ENCODE measurements at regions of chr14 and their contacts with region 1.

Region 1: GRCh38 chr14:24093901-24094761 is at the start of gene PCK2:
- DNase-seq: peak; percentile 76
- ATAC-seq: peak; percentile 69
- H3K4me3 Mint-ChIP-seq: peak within 1 kb of the TSS; percentile 99
- H3K27ac Mint-ChIP-seq: peak within 1 kb of the TSS; percentile 99
- H3K4me1 Mint-ChIP-seq: peaks cover 31% of the 10 kb centered on the region
- H3K27me3 Mint-ChIP-seq: no peaks in the 10 kb centered on the region
- CTCF ChIP-seq: no peak
- total RNA-seq, gene PCK2: 82.1 and 102 TPM in 2 replicates

Region 2: GRCh38 chr14:24036169-24036962 is 57.8 kb before region 1 on chr14:
- CTCF ChIA-PET with region 1: interaction called, 3 read pairs
- POLR2A ChIA-PET with region 1: no interaction called
- intact Hi-C with region 1: loop called (anchors 1 kb)
- DNase-seq: peak; percentile 50
- ATAC-seq: peak; percentile 76
- H3K4me3 Mint-ChIP-seq: peak overlapping the region; percentile 89
- H3K27ac Mint-ChIP-seq: peak overlapping the region; percentile 62
- H3K4me1 Mint-ChIP-seq: peaks cover 7% of the 10 kb centered on the region
- H3K27me3 Mint-ChIP-seq: no peaks in the 10 kb centered on the region
- CTCF ChIP-seq: no peak

Region 3: DNA sequence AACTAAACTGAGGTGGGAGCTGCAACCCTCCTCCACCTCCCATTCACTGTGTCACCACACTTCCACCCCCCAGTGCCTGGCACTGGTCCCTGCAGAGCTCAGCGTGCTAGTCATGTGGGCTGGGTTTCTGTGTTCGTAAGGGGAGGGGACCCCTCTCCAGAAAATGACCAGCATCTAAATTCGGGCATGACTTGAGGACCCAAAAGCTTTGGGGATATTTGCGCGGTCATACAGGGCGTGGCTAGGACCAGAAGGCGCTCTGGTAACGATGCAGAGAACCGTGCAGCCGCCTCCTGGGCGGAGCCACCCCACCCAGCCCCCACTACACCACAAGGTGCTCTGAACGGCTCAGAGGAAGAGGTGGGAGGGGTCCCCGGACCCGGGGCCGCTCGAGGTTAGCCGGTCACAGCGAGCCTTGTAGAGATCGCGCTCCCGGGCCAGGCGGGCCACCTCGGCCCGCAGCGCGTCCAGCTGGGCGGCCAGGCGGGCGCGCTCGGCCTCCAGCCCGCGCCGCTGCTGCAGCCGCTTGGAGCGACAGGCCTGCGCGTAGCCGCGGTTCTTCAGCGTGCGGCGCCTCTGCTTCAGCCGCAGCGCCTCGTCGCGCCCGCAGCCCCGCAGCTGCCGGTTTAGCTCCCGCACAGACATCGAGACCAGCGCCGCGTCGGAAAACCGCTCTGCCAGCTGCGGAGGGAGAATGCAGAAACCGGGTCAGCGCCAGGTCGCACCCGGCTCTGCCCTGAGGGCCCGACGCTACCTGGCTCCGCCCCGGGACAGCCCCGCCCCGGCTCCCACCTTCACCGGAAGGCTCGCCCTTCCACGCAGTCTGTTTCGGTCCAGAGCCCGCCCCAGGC is 13.0 kb before region 1 on chr14:
- CTCF ChIA-PET with region 1: interaction called, 24 read pairs
- POLR2A ChIA-PET with region 1: interaction called, 111 read pairs
- intact Hi-C with region 1: loop called (anchors 1 kb)
- DNase-seq: peak; percentile 75
- ATAC-seq: peak; percentile 95
- H3K4me3 Mint-ChIP-seq: peak overlapping the region; percentile 82
- H3K27ac Mint-ChIP-seq: peak overlapping the region; percentile 83
- H3K4me1 Mint-ChIP-seq: peaks cover 32% of the 10 kb centered on the region
- H3K27me3 Mint-ChIP-seq: no peaks in the 10 kb centered on the region
- CTCF ChIP-seq: no peak

Region 4: GRCh38 chr14:24135834-24136542 is 41.9 kb after region 1 on chr14 and contains the start of gene PSME1:
- CTCF ChIA-PET with region 1: no interaction called
- POLR2A ChIA-PET with region 1: interaction called, 37 read pairs
- intact Hi-C with region 1: loop called (anchors 1 kb)
- DNase-seq: peak; percentile 94
- ATAC-seq: peak; percentile 97
- H3K4me3 Mint-ChIP-seq: peak within 1 kb of the TSS; percentile 91
- H3K27ac Mint-ChIP-seq: peak within 1 kb of the TSS; percentile 90
- H3K4me1 Mint-ChIP-seq: peaks cover 57% of the 10 kb centered on the region
- H3K27me3 Mint-ChIP-seq: no peaks in the 10 kb centered on the region
- CTCF ChIP-seq: no peak
- total RNA-seq, gene PSME1: 406 and 449 TPM in 2 replicates

Region 5: GRCh38 chr14:24195191-24196070 is 101.3 kb after region 1 on chr14 and contains the start of gene TM9SF1:
- CTCF ChIA-PET with region 1: no interaction called
- POLR2A ChIA-PET with region 1: interaction called, 19 read pairs
- intact Hi-C with region 1: loop called (anchors 1 kb)
- DNase-seq: peak; percentile 91
- ATAC-seq: peak; percentile 83
- H3K4me3 Mint-ChIP-seq: peak within 1 kb of the TSS; percentile 96
- H3K27ac Mint-ChIP-seq: peak within 1 kb of the TSS; percentile 97
- H3K4me1 Mint-ChIP-seq: peaks cover 48% of the 10 kb centered on the region
- H3K27me3 Mint-ChIP-seq: no peaks in the 10 kb centered on the region
- CTCF ChIP-seq: no peak
- total RNA-seq, gene TM9SF1: 24.5 and 26.3 TPM in 2 replicates

Region 6: GRCh38 chr14:24207104-24207551 is 113.0 kb after region 1 on chr14:
- CTCF ChIA-PET with region 1: no interaction called
- POLR2A ChIA-PET with region 1: no interaction called
- intact Hi-C with region 1: no loop called
- DNase-seq: no peak
- ATAC-seq: peak; percentile 52
- H3K4me3 Mint-ChIP-seq: no peak overlapping the region
- H3K27ac Mint-ChIP-seq: peak overlapping the region; percentile 57
- H3K4me1 Mint-ChIP-seq: peaks cover 37% of the 10 kb centered on the region
- H3K27me3 Mint-ChIP-seq: no peaks in the 10 kb centered on the region
- CTCF ChIP-seq: no peak

Region 7: DNA sequence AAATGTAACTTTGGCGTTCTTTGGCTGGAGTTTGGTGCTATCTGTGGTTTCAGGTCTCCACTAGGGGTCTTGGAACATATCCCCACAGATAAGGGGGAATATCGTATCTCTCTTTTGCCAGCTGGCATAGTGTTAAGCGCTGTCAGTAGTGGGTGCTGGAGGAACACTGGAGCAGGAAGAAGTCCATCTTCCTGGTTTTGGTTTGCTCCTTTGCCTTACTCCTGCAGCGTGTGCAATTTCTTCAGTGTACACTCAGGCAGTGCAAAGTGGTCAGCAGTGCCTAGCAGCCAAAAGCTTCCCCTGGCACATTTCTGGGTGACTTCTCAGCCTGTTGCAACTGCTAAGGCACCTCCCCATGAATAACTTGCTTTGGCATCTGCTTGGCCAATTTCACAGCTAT is 257.4 kb after region 1 on chr14:
- CTCF ChIA-PET with region 1: no interaction called
- POLR2A ChIA-PET with region 1: no interaction called
- intact Hi-C with region 1: no loop called
- DNase-seq: no peak
- ATAC-seq: no peak
- H3K4me3 Mint-ChIP-seq: no peak overlapping the region
- H3K27ac Mint-ChIP-seq: no peak overlapping the region
- H3K4me1 Mint-ChIP-seq: no peaks in the 10 kb centered on the region
- H3K27me3 Mint-ChIP-seq: peaks cover 38% of the 10 kb centered on the region
- CTCF ChIP-seq: no peak

Region 8: DNA sequence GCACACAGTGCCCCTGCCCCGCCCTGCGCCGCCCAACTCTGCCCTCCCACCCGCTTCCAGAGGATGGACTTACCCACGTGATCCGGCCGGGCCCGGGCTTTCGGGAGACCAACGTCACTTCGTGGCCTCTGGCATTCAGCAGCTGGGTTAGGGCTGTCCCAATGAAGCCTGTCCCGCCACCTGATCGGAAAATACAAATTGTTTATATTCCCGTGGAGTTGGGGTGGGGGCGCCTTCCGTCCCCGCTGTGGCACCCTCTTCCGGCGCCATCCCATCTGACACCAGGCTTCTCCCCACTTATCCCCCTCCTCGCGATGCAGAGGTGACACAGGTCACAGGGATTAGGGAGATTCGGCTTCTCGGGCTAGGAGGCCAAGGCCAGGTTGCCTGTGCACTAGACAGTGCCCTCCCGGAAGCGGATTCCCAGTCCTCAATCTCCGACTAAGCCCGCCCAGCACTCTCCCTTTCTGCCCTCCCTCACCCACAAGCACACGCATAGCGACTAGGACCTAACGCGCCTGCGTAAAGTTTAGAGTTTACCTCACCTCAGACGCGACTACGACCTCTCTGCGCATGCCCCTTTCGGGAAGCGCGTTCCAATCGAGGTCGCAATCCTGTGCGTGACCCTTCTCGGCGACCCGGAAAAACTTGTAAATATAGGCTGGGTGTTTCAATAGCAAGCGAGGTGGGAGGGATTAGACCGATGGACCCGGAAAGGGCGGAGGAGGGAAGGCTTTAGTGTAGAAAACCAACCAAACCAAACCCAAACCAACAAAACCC is 348.3 kb after region 1 on chr14 and contains the start of gene SDR39U1:
- CTCF ChIA-PET with region 1: no interaction called
- POLR2A ChIA-PET with region 1: interaction called, 15 read pairs
- intact Hi-C with region 1: no loop called
- DNase-seq: peak; percentile 81
- ATAC-seq: peak; percentile 89
- H3K4me3 Mint-ChIP-seq: peak within 1 kb of the TSS; percentile 98
- H3K27ac Mint-ChIP-seq: peak within 1 kb of the TSS; percentile 98
- H3K4me1 Mint-ChIP-seq: peaks cover 48% of the 10 kb centered on the region
- H3K27me3 Mint-ChIP-seq: no peaks in the 10 kb centered on the region
- CTCF ChIP-seq: no peak
- total RNA-seq, gene SDR39U1: 70.6 and 80.0 TPM in 2 replicates